ENCODE measurements at regions of chr4 and their contacts with region 1.

Region 1: DNA sequence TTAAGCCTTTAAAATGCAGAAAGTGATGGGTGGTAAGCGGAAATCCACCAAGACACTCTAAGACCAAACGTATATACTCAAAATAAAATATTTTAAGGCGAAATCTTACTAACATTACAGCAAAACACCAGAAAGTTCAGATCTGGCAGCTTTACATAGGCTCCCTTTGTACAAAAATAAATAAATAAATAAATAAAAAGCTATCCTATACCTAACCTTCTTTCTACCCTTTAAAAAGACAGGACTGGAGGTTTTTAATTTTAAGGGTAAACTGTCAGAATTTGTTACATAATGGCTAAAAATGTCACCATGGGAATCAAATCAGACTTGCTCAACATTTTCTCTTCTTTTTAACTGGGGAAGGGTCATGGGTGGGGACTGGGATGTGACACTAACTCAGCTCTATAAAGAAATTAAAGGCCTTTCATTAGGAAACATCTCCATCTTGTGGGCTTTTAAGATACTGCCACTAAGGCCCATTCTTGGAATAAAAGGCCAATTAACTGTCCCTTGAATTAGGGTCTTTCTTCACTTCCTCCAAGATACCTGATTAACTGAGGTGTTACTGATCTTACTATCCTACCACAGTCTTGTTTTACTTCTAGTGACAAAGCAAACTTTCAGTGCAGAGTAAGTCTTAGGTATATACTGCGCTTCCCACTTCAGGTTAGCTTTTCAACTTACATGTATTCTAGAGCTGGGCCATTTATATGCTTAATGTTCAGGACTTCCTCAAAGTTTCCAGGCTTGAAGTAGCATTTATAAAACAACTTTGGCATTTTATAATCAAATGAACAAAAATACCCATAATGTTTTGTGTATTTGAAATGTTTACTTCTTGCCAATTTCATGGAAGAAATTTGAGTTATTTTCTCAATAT is 13.3 kb downstream of the HNRNPD start:
- DNase-seq: peak; percentile 30
- H3K4me3 ChIP-seq: no peak overlapping the region
- H3K27ac ChIP-seq: no peak overlapping the region; a peak in 1 of 4 replicates
- H3K4me1 ChIP-seq: peaks cover 2 to 12% of the 10 kb centered on the region in 2 experiments; a peak in 3 of 4 replicates
- H3K27me3 ChIP-seq: no peaks in the 10 kb centered on the region
- CTCF ChIP-seq: peak; percentile 72
- EP300 ChIP-seq: no peak
- RAD21 ChIP-seq: peak; percentile 48

Region 2: GRCh38 chr4:82373816-82374625 is 13.5 kb after region 1 on chr4 and contains the start of gene HNRNPD:
- CTCF ChIA-PET with region 1: interaction called, 12 read pairs
- POLR2A ChIA-PET with region 1: interaction called, 3 read pairs
- DNase-seq: peak; percentile 97
- H3K4me3 ChIP-seq: peak within 1 kb of the TSS; percentile 75 to 89
- H3K27ac ChIP-seq: peak within 1 kb of the TSS; percentile 96
- H3K4me1 ChIP-seq: peaks cover 10 to 13% of the 10 kb centered on the region in 2 experiments; a peak in 3 of 4 replicates
- H3K27me3 ChIP-seq: no peaks in the 10 kb centered on the region
- CTCF ChIP-seq: no peak; the same call in 1 of the 2 replicates
- EP300 ChIP-seq: peak in 1 of 2 experiments; percentile 34; a peak in 2 of 4 replicates
- RAD21 ChIP-seq: no peak
- polyA plus RNA-seq, gene HNRNPD: 128 and 286 TPM in 2 replicates

Measured in SK-N-SH (cell line).